ENCODE measurements at regions of chr10 and their contacts with region 1.

Region 1: DNA sequence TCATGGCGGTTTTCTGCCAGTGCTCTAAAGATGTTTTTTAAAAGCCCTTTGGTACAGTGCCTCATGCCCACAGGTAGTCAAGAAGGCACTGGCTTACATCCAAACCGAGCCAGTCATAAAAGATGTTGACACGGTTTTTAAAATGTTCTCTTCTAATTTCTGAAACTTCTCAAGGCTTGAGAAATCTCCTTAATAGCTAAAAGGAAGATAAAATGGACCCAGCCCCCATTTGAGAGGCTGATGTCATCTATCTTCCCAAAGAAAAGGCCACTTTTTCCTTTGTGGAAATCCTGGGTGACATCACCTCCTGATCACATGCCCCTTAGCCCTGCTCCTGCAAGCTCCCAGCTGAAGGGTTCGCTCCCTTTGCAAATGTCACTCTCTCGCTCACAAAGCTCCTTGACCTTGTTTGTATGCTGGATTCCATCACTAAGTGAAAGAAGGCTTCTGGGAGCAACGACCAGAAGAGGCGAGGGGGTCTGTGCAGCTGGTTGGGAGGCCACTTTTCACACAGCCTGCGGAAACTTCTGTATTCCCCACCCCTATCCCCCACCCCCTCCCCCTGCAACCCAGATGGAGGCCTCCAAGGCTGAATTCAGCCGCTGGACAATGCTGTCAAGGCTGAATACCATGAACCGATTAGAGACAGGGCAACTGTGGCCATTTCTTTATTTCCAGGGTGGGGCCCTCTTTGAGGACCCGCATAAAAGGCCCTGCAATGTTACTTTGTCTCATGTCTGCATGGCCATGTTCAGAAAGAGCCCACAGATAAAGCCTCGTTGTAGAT is 122.8 kb downstream of the CUBN start:
- DNase-seq: no peak
- ATAC-seq: peak; percentile 10

Region 2: DNA sequence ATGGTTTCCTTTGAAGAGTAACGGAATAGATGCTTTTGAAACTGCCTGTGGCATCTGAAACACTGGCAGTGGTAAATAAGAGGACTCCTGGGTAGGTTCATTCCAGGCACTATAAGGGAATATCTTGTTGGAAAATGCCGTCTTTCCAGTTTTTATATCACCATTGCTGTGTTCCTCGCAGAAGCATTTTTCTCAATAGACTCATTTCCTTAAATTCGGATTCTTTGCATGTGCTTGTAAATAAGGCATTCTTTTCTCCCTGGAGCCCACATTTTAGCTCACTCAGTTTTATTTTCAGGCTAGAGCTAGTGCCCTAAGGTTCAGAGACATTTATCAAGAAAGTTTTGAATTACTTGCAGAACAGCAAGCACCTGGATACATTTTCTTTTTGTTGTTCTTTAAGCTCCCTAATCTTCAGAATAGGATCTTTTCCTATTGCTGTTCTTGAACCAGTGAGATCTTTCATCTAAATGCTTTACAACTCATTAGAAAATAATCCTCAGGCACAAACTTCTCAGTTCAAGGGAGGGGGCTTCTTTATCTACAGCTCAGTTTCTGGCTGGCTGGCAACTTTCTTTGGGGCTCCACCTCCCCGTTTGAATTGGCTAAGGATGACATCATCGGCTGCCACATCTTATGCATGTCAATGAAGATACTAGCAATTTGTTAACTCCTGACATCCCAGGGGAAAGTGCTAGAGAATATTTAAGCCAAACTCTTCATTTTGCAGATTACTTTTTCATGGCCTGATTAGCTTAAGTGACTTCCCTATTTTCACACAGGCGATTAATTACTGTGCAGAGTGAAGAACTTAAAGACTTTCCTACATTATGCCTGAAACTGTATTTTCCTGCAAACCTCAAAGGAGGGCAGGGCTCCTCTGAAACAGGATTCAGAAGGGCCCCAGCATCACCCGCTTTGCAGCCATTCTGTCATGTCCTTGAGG is 55.9 kb before region 1 on chr10:
- intact Hi-C with region 1: loop called (anchors 5 kb)
- DNase-seq: no peak
- ATAC-seq: peak; percentile 34

Region 3: DNA sequence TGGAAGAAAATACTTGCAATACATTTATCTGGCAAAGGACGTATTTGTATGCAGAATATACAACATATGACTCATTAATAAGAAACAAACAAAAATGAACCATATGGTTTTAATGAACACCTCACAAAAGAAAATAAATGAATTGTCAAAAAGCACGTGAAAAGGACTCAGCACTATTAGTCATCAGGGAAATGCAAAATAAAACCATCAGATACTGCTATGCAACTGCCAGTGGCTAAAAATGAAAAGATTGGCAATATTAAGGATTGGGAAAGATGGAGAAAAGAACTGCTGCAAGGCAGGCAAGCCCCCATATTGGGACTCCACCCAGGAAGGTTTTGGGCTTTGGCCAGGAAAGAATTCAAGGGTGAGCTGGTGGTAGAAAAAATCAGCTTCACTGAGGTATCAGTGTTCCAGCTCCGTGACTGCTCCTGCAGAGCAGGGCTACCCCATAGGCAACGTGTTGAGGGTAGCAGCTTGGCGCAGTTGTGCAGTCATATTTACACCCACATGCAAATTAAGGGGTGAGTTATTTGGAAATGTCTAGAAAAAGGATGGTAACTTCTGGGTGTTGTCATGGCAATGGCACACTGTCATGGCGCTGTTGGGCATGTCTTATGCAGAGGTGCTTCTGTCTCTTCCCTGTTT is 50.1 kb after region 1 on chr10:
- intact Hi-C with region 1: no loop called
- DNase-seq: no peak
- ATAC-seq: no peak